ENCODE measurements at regions of chr9 and their contacts with region 1.

Region 1: GRCh38 chr9:37027582-37028419 is 6.3 kb downstream of the PAX5 start:
- DNase-seq: peak; percentile 96
- H3K4me3 Mint-ChIP-seq: peak overlapping the region; percentile 78
- H3K27ac Mint-ChIP-seq: no peak overlapping the region
- H3K4me1 Mint-ChIP-seq: peaks cover 10% of the 10 kb centered on the region
- H3K27me3 Mint-ChIP-seq: peaks cover 55% of the 10 kb centered on the region
- CTCF ChIP-seq: no peak

Region 2: GRCh38 chr9:37079370-37080164 is 51.8 kb after region 1 on chr9:
- CTCF ChIA-PET with region 1: no interaction called
- POLR2A ChIA-PET with region 1: no interaction called
- intact Hi-C with region 1: loop called (anchors 1 kb)
- DNase-seq: peak; percentile 95
- H3K4me3 Mint-ChIP-seq: peak overlapping the region; percentile 88
- H3K27ac Mint-ChIP-seq: peak overlapping the region; percentile 93
- H3K4me1 Mint-ChIP-seq: peaks cover 17% of the 10 kb centered on the region
- H3K27me3 Mint-ChIP-seq: no peaks in the 10 kb centered on the region
- CTCF ChIP-seq: no peak

Measured in MCF 10A (cell line).